Right ventricle myocardium inferior (tissue), 1 donor: ENCODE measurements at regions of chr2 and their contacts with region 1.

Region 1: DNA sequence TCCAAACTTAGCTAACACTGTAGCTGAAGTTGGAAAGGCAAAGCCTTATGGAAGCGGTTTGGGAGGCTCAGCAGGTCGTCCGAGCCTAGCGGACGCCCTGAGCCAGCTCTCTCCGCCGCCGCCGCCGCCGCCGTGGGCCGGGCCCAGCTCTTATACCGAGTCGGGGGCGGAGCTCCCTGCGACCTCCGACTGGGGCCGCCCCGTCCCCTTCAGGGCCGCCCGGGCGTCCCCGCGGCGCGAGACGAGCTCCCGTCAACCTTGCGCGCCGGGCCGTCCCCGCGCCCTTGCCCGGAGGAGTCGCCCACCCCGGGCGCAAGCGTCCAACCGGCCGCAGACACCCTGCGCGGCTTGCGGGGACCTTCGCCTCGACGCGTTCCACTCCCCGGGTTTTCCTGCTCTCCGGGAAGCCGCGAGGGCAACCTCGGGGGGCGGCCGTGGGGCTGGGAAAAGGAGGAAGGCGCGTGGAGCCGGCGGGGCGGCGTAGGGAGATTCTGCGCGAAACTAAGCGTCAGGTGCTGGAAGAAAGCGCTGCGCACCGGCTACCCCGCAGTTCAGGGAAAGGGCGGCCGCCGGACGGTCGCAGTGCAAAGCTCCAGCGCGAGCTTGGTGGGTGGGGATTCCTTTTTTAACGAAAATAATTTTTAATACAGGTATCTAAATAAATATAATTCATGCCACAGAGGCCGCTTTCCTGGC is at the start of gene SLC40A1:
- DNase-seq: peak; percentile 93
- ATAC-seq: peak; percentile 98
- total RNA-seq, gene SLC40A1: 51.0 TPM

Region 2: GRCh38 chr2:189440947-189441708 is 139.7 kb before region 1 on chr2 and contains the start of gene WDR75:
- intact Hi-C with region 1: loop called (anchors 2 kb)
- DNase-seq: peak; percentile 96
- ATAC-seq: peak; percentile 99
- total RNA-seq, gene WDR75: 16.5 TPM

Region 3: GRCh38 chr2:189466660-189467059 is 114.1 kb before region 1 on chr2:
- intact Hi-C with region 1: loop called (anchors 2 kb)
- DNase-seq: no peak
- ATAC-seq: peak; percentile 65

Region 4: DNA sequence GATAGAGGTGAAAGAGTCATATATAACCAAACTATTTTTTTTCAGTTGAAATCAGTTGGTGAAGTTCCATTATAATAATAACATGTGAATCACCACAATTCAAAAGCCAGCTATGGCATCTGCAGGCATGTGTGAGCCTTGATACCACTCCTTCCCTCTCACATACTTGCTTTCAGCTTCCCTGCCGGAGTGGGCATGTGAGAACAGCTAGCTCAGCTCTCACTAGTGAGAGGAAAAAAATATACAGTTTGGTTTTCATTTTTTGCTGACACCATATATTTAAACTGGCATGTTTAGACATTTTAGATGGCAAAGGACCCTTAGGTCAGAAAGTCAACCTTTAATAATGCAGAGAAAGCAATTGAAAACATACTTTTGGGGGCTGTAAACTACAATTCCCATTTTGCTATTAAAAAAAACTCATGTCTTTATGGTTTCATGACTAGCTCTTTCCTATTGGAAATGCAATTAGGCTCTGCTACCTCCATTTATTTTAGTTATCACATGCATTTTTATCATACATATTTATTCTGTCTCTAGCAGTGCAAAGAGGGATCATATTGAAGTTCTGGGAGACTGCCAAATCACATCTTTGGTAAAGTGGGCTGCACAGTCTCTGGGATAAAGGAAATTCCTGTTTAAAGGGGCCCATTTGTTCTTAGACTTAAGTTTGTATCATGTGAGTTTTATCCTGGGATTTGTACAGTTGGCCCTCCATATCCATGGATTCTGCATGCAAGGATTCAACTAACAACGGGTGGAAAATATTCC is 33.0 kb after region 1 on chr2:
- intact Hi-C with region 1: loop called (anchors 1 kb)
- DNase-seq: no peak
- ATAC-seq: peak; percentile 78

Region 5: GRCh38 chr2:189633392-189633811 is 52.6 kb after region 1 on chr2:
- intact Hi-C with region 1: loop called (anchors 2 kb)
- DNase-seq: peak; percentile 67
- ATAC-seq: no peak

Region 6: DNA sequence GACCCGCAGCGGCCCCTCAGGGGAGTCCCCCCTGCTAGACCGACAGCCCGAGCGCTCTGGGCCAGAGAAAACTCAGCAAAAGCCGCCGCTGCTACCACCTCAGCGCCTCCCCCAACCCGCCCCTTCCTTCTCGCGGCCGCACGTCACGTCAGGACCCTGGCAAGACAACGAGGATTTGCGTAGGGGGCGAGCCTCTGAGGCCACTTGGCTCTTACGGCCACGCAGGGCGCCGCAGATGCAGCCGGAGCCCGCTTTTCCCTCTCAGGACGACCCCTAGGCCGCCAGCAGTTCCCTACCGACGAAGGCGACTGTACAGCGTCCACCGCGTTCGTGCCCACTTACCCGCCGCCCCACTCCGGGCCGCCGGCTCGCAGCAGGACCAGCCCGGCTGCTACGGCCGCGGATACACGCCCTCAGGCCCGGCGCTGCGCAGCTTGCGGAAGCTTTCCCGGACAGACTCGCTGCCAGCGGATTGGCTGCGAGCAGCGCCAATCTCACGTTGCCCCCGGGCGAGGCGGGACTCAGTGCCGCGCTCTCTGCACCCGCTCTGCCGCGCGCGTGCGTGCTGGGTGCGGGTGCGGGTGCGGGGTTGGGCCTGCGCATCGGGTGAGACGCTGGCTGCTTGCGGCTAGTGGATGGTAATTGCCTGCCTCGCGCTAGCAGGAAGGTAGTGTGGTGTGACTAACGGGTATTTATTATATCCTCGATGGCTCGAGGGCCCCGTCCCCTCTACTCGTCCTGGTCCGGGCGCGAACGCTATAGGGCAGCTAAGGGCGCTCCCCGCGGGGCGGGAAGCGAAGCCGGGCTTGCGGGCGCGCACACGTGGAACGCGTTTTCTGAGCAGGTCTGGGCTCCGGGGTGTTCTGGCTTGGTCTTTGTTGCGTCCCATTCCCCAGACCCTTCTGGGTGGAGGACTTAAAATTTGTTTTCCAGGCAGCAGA is 203.4 kb after region 1 on chr2 and contains the starts of genes ORMDL1 and PMS1:
- intact Hi-C with region 1: loop called (anchors 10 kb)
- DNase-seq: peak; percentile 99
- ATAC-seq: peak; percentile 99
- total RNA-seq, gene ORMDL1: 21.9 TPM
- total RNA-seq, gene PMS1: 15.1 TPM